OCI-LY7 (cell line): ENCODE measurements at regions of chr11 and their contacts with region 1.

Region 1: GRCh38 chr11:73147771-73148681 is 5.9 kb upstream of the FCHSD2 start:
- DNase-seq: no peak
- H3K4me3 ChIP-seq: no peak overlapping the region
- H3K27ac ChIP-seq: peak overlapping the region; percentile 44
- H3K4me1 ChIP-seq: peaks cover 98% of the 10 kb centered on the region
- CTCF ChIP-seq: no peak

Region 2: GRCh38 chr11:73164803-73165540 is 16.9 kb after region 1 on chr11:
- CTCF ChIA-PET with region 1: interaction called, 4 read pairs
- POLR2A ChIA-PET with region 1: interaction called, 76 read pairs
- intact Hi-C with region 1: no loop called
- DNase-seq: no peak
- H3K4me3 ChIP-seq: no peak overlapping the region
- H3K27ac ChIP-seq: peak overlapping the region; percentile 17
- H3K4me1 ChIP-seq: peaks cover 81% of the 10 kb centered on the region
- CTCF ChIP-seq: no peak